ENCODE measurements at regions of chr14 and their contacts with region 1.

Region 1: DNA sequence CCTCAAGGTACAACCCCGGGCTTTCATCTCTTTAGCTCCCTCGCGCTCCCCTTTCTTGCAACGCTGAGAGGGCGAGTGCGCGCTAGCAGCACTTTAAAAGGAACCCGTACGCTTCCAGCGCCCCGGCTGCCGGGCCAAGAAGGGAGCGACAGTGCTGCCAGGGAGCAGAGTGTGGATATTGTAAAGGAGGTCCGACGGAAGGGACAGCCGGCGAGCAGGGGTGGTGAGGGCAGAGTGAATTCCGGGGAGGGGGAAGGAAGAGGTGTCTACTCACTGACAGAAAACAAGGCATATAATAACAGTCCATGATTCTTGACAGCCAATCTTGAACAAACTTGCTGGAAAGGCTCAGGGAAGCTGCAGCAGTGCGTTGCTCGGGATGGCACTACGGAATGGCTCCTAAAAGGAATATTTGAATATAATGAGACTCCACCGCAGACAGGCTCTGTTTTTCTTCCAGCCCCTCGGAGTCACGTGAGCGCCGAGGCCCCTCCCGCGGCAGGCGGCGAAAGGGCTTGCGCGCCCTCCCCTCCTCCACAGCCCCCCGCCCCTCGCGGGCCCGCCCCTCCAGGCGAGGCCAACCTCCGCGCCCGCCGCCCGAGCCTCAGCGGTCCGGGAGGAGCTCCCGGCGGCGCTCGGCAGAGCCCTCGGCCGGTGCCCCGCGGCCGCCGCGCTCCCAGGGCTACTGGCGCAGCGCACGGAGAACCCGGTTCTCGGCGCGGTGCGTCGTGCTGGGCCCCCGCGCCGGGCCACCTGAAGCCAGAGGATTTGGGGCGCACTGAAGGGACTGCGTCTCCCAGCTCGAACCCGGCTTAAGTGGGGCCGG is 3.4 kb downstream of the BMP4 start:
- DNase-seq: peak; percentile 92
- ATAC-seq: peak; percentile 92

Region 2: DNA sequence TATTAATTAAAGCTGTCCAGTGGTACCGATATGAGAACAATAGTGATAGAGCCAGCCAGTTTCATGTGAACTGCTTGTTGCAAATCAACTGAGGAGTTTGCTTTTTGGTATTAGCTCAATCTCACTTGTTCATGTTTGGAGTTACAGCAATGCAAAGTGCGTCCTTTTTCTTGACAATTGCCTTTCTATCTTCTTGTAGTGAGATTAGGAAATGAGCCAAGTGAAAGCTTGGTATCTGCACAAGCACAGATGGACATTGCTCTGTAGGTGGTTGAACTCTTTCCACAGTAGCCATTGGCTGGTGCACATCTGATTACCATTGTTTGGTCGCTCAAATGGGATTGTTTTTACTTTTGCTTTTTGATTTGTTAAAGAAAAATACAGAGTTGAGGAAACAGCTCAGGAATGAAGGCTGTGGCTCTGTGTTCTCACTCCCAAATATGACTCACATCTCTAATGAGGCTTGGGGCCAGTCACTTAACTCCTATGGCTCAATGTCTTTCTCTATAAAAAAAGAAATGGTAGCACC is 238.0 kb before region 1 on chr14:
- intact Hi-C with region 1: loop called (anchors 2 kb)
- DNase-seq: no peak
- ATAC-seq: peak; percentile 83

Region 3: DNA sequence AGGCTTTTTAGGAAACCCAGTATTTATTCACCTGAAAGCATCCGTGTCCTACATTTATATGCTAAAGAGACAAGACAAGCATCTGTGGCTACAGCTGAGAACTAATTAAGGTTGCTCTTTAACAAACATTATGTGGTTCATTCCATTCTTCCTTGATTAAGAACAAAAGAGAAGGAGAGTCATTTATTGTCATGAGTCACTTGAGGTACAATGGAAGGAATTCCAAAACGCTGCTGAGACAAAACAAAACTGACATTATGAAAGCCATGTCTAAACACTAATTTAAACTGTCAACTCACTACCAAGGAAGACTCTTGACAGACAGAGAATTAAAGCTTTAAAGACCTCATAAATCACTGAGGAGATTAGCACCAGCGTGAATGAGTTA is 211.0 kb before region 1 on chr14:
- intact Hi-C with region 1: no loop called
- DNase-seq: no peak
- ATAC-seq: no peak

Region 4: DNA sequence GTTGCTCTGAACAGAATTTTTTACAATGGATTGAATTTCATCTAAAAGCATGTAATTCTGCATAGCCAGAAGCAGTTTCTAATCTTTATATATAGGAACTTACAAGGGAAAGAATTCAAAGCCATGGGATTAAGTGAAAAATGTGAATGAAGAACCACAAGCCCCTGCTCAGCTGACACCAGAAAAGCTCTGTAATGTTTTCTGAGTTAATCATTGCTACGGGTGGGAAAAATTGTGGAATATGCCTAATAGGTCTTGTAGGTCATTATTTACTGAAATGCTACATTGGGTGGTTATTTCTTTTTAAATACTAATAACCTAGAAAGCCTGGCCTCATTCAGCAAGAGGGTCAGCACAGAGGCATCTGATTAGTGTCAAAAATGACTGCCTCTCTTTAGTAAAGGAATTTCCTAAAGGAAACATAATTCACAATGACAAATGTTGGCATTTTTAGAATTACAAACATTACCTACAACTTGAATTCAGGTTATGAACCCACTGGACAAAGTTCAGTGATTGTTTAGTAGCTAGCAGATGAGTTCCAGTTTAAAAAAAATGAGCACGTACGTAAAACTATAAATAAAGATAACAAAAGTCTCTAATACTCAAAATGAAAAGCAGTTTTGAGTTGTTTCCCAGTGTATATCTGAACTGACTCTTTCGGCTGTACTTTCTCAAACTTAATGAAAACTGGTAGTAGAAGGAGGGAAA is 71.9 kb before region 1 on chr14:
- intact Hi-C with region 1: loop called (anchors 2 kb)
- DNase-seq: no peak
- ATAC-seq: no peak

Region 5: GRCh38 chr14:54175298-54175942 is 222.2 kb after region 1 on chr14:
- intact Hi-C with region 1: loop called (anchors 10 kb)
- DNase-seq: no peak
- ATAC-seq: peak; percentile 32

Measured in Right ventricle myocardium inferior (tissue), 1 donor.